Adrenal gland (tissue), 19 donors: ENCODE measurements at regions of chr11 and their contacts with region 1.

Region 1: GRCh38 chr11:66480117-66480938 is at the start of gene DPP3:
- DNase-seq: peak; percentile 98 to 99 (median 98)
- H3K4me3 ChIP-seq: peak within 1 kb of the TSS; percentile 53 to 89 (median 71)
- H3K27ac ChIP-seq: peak within 1 kb of the TSS; percentile 70 to 98 (median 94)
- H3K4me1 ChIP-seq: peaks cover 8 to 16% of the 10 kb centered on the region in 2 donors
- H3K27me3 ChIP-seq: no peaks in the 10 kb centered on the region
- CTCF ChIP-seq: peak in 1 of 6 experiments; percentile 5
- POLR2A ChIP-seq: peak; percentile 88 to 96
- total RNA-seq, gene DPP3: 25.5 to 70.9 (median 43.3) TPM

Region 2: DNA sequence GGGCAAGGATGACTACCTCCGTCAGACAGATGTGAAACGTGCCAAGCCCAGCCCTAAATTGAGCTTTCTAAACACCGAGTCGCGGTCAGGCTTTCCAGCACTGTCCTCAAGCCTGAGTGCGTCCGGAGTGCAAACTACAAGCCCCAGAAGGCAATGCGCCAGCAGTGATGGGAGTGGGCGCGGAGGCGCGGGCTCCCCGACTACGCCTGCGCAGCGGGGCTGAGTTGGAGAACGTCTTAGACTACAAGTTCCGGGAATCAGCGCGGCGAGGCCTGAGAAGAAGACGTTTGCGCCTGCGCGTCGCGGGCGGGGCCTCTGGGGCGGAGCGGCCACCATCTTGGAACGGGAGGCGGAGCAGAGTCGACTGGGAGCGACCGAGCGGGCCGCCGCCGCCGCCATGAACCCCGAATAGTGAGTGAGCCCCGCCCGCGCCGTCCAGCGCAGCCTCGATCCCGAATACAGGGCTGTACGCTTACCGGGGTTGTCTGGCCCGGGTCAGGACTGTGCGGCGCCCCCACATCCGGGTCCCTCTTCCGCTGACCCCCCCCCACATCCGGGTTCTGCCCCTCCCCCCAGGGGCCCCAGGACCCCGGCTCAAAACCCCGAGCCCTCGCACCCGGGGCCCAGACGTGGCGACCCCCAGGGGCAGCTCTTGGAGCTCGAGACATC is 211.9 kb before region 1 on chr11 and contains the start of gene RAB1B:
- intact Hi-C with region 1: no loop called
- DNase-seq: peak; percentile 99 to 100 (median 100)
- H3K4me3 ChIP-seq: peak within 1 kb of the TSS; percentile 47 to 94 (median 85)
- H3K27ac ChIP-seq: peak within 1 kb of the TSS; percentile 73 to 98 (median 92)
- H3K4me1 ChIP-seq: peaks cover 5 to 24% of the 10 kb centered on the region in 2 donors
- H3K27me3 ChIP-seq: no peaks in the 10 kb centered on the region
- CTCF ChIP-seq: no peak
- POLR2A ChIP-seq: peak; percentile 40 to 83
- total RNA-seq, gene RAB1B: 128 to 190 (median 164) TPM

Region 3: DNA sequence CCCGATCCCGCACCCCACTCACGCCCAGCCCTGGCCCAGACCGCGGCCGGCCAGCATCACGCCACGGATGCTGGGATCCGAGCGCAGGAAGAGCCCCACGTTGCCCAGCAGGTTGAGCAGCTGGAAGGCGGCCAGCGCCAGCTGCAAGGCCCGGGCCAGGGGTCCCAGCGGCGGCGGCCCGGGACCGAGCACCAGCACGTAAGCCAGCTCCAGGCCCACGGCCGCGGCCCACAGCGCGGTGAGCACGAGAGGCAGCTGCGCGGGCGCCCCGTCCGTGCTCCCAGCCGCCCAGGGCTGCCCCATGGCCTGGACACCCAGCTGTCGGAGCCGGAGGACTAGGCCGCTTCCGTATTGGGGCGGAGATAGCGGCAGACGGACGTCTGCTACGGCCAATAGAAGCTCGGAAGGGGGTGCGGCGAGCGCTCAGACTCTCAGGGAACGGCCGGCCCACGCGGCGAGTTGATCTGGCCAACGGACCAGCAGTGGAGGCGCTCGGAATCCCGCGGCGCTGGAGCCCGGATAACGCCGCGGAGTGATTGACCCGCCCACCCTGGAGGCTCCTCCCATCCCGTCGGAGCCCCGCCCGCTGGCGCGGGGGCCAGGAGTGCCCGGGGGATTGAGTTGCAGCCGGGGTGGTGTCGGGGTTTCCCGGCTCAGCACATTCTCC is 65.5 kb after region 1 on chr11 and contains the start of gene ZDHHC24:
- intact Hi-C with region 1: loop called in 1 of 2 experiments (anchors 10 kb)
- DNase-seq: peak; percentile 97 to 99 (median 98)
- H3K4me3 ChIP-seq: peak within 1 kb of the TSS; percentile 25 to 86 (median 80)
- H3K27ac ChIP-seq: peak within 1 kb of the TSS in 3 of 5 donors; percentile 46 to 73 (median 54)
- H3K4me1 ChIP-seq: peaks cover 10 to 18% of the 10 kb centered on the region in 2 donors
- H3K27me3 ChIP-seq: no peaks in the 10 kb centered on the region
- CTCF ChIP-seq: no peak
- POLR2A ChIP-seq: peak; percentile 63 to 79
- total RNA-seq, gene ZDHHC24: 9.4 to 34.7 (median 21.7) TPM

Region 4: DNA sequence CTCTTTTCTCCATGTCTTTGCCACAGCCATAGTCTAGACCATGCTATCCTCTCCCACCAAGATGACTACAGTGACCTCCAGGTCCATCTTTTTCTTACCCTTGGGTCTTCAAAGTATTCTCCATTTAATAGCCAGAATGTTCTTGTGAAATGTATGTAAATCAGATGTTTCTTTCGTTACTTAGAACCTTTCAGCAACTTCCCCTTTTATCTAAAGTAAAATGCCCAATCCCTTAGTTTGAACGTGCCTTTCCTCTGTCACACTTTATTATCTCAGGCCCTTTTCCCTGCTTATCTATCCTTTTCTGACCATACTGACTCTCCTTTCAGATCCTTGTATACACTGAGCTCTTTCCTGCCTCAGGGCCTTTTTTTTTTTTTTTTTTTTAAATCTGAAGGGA is 179.4 kb after region 1 on chr11:
- intact Hi-C with region 1: no loop called
- DNase-seq: no peak
- H3K4me3 ChIP-seq: no peak overlapping the region
- H3K27ac ChIP-seq: no peak overlapping the region
- H3K4me1 ChIP-seq: no peaks in the 10 kb centered on the region
- H3K27me3 ChIP-seq: no peaks in the 10 kb centered on the region
- CTCF ChIP-seq: no peak
- POLR2A ChIP-seq: no peak